Activated CD4-positive, alpha-beta T cell treated with anti-CD3 and anti-CD28 coated beads, Interleukin-2, amount 10 ng/mL, durations not matched to agents 24 days and 14 days (primary cell): ENCODE measurements at regions of chr2 and their contacts with region 1.

Region 1: DNA sequence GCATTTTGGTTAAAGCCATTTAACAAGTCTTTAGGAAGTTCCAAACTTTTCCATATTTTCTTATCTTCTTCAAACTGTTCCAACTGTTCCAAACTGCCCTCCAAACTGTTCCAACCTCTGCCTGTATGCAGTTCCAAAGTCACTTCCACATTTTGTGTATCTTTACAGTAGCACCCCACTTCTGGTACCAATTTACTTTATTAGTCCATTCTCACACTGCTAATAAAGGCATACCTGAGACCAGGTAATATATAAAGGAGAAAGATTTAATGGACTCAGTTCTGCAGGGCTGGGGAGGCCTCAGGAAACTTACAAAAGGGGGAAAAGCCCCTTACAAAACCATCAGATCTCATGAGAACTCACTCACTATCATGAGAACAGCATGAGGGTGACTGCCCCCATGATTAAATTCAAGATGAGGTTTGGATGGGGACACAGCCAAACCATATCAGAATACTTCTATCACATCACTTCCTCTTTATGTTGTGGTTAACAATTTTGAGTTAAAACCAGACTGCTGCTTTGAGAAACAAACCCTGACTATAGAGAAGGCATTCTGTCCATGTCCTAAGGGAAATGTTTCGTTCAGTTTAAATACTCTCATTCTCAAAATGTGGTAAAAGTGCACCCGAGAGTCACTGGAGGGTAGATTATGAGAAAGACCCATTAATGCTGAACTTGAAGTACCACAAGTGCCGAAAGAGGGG is 11.0 kb downstream of the IL18R1 start:
- DNase-seq: peak; percentile 64
- H3K4me3 Mint-ChIP-seq: peak overlapping the region; percentile 73
- H3K27ac Mint-ChIP-seq: peak overlapping the region; percentile 91
- H3K4me1 Mint-ChIP-seq: peaks cover 77% of the 10 kb centered on the region
- H3K27me3 Mint-ChIP-seq: no peaks in the 10 kb centered on the region

Region 2: DNA sequence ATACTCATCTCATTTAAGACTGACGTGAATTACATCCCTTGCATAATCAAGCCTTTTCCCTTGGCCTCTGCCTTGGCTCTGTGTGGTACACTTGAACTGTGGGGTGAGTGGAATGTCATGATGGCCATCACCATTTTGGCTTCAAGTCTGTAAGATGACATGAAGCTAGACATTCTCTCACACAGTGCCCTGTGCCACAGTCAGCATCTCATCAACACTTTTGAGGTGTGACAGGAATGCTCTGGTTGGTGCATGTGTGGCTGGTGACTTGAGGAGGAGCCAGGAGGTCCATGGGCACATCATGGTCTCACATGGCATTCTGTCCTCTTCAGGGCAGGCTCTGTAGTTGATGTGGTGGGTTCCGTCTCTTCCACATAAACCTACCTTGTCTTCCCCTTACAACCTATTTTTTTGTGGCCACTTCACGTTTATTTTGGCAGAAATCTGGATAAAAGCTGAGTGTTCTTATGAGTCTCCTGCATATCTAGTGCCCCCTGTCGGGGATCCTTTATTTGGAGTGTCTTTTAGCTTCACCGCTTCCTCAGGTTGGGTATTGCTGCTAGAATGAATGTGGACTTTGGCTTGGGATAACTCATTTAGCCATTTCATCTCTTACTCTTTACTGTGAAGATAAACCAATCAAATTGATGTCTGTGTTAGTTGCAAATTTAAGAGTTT is 640.9 kb before region 1 on chr2:
- intact Hi-C with region 1: loop called (anchors 10 kb)
- DNase-seq: peak; percentile 66
- H3K4me3 Mint-ChIP-seq: no peak overlapping the region
- H3K27ac Mint-ChIP-seq: no peak overlapping the region
- H3K4me1 Mint-ChIP-seq: peaks cover 74% of the 10 kb centered on the region
- H3K27me3 Mint-ChIP-seq: no peaks in the 10 kb centered on the region

Region 3: GRCh38 chr2:102138331-102138730 is 228.2 kb before region 1 on chr2:
- intact Hi-C with region 1: loop called (anchors 5 kb)
- DNase-seq: no peak
- H3K4me3 Mint-ChIP-seq: no peak overlapping the region
- H3K27ac Mint-ChIP-seq: peak overlapping the region; percentile 1
- H3K4me1 Mint-ChIP-seq: peaks cover 24% of the 10 kb centered on the region
- H3K27me3 Mint-ChIP-seq: peaks cover 31% of the 10 kb centered on the region

Region 4: GRCh38 chr2:102313025-102313424 is 53.5 kb before region 1 on chr2:
- intact Hi-C with region 1: no loop called
- DNase-seq: no peak
- H3K4me3 Mint-ChIP-seq: no peak overlapping the region
- H3K27ac Mint-ChIP-seq: no peak overlapping the region
- H3K4me1 Mint-ChIP-seq: peaks cover 15% of the 10 kb centered on the region
- H3K27me3 Mint-ChIP-seq: no peaks in the 10 kb centered on the region

Region 5: DNA sequence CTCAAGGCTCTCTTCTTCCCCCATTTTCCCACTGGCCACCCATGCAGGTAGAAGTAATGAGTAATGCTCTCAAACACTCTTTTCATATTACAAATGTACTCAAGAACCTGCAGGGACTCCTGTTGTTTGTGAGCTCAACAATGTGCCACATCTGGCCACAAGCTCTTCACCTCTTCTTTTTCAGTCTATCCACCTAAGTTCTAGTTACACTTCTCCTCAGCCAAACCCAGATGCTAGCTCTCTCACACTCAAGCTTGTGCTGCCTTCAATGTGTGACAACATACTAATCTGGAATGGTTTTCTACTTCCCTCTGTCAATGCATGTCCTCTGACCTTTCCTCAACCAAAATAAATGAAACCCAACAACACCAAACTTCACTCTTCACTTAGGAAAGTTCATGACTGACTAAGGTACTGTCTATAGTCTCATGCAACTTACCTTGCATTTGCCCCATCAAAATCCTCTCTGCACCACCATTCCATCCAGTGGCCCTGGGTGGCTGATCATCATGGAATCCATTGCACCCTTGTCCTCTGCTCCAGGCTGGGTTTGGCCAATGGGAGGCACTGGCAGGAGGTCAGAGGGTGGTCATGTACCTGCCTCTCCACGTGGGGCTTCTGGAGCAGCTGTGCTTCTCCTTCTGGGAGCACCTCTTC is 16.3 kb before region 1 on chr2:
- intact Hi-C with region 1: loop called (anchors 2 kb)
- DNase-seq: peak; percentile 74
- H3K4me3 Mint-ChIP-seq: no peak overlapping the region
- H3K27ac Mint-ChIP-seq: no peak overlapping the region
- H3K4me1 Mint-ChIP-seq: peaks cover 17% of the 10 kb centered on the region
- H3K27me3 Mint-ChIP-seq: no peaks in the 10 kb centered on the region

Region 6: DNA sequence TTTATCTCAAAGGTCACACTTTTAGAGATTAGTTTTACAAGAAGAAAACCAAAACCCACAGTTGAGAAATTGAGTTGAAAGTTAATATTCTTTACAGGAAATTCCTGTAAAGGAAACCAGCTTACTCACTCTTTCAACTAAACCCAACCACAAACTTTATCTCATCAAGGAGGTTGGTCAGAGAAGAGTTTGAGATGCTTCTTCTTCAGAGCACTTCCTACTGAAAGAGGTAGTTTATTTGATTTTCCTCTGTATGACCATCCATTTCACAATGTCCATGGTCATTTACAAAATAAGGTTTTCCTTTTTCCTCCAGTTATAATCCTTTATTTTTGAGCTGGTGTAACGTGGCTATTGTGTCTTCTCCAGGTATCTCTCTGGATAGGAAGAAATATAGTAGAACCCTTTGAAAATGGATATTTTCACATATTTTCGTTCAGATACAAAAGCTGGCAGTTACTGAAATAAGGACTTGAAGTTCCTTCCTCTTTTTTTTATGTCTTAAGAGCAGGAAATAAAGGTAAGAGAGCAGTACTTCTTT is 51.9 kb after region 1 on chr2:
- intact Hi-C with region 1: loop called (anchors 1 kb)
- DNase-seq: peak; percentile 79
- H3K4me3 Mint-ChIP-seq: peak overlapping the region; percentile 86
- H3K27ac Mint-ChIP-seq: peak overlapping the region; percentile 94
- H3K4me1 Mint-ChIP-seq: peaks cover 69% of the 10 kb centered on the region
- H3K27me3 Mint-ChIP-seq: no peaks in the 10 kb centered on the region